Activated CD4-positive, alpha-beta memory T cell treated with anti-CD3 and anti-CD28 coated beads for 36 hours (primary cell): ENCODE measurements at regions of chr1 and their contacts with region 1.

Region 1: GRCh38 chr1:63674238-63674864 is 81.1 kb downstream of the PGM1 start:
- DNase-seq: peak; percentile 28
- H3K4me3 Mint-ChIP-seq: no peak overlapping the region
- H3K27ac Mint-ChIP-seq: no peak overlapping the region
- H3K4me1 Mint-ChIP-seq: no peaks in the 10 kb centered on the region
- H3K27me3 Mint-ChIP-seq: no peaks in the 10 kb centered on the region

Region 2: GRCh38 chr1:63615768-63616420 is 58.5 kb before region 1 on chr1:
- CTCF ChIA-PET with region 1: no interaction called
- POLR2A ChIA-PET with region 1: no interaction called
- intact Hi-C with region 1: loop called (anchors 2 kb)
- DNase-seq: peak; percentile 48
- H3K4me3 Mint-ChIP-seq: no peak overlapping the region
- H3K27ac Mint-ChIP-seq: no peak overlapping the region
- H3K4me1 Mint-ChIP-seq: peaks cover 3% of the 10 kb centered on the region
- H3K27me3 Mint-ChIP-seq: no peaks in the 10 kb centered on the region

Region 3: GRCh38 chr1:63662056-63662836 is 12.1 kb before region 1 on chr1:
- CTCF ChIA-PET with region 1: no interaction called
- POLR2A ChIA-PET with region 1: no interaction called
- intact Hi-C with region 1: no loop called
- DNase-seq: no peak
- H3K4me3 Mint-ChIP-seq: no peak overlapping the region
- H3K27ac Mint-ChIP-seq: no peak overlapping the region
- H3K4me1 Mint-ChIP-seq: peaks cover 11% of the 10 kb centered on the region
- H3K27me3 Mint-ChIP-seq: no peaks in the 10 kb centered on the region